ENCODE measurements at regions of chr22 and their contacts with region 1.

Region 1: DNA sequence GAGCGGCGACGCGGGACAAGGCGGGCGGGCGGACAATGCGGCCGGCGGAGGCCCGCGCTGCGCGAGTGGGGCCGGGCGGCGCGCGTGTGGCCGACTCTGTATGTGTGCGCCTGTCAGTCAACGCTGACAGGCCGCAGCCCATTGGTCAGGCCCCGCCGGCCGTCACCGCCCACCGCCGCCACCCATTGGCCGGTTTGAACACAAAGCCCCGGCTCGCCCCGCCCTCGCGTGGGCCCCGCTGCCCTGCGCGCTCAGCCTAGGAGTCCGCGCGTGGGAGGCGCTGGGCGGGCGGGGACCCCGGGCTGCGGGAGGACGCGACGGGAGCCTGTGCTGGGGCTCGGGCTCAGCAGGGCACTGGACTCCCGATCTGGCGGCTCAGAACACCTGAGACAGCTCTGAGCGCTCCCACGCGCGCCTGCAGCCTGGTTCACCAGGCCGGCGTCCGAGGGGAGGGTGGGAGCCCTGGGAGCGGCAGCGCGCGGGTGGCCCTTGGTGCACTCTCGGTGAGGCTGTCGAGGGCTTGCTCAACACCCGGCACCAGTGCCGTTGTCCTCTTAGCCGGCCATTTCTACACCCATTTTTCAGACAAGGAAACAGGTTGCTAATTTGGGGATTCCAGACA is at the start of gene SUN2:
- H3K4me3 ChIP-seq: peak within 1 kb of the TSS; percentile 71
- H3K27ac ChIP-seq: peak within 1 kb of the TSS; percentile 97
- H3K4me1 ChIP-seq: peaks cover 9% of the 10 kb centered on the region
- CTCF ChIP-seq: no peak

Region 2: GRCh38 chr22:38850941-38851849 is 95.2 kb after region 1 on chr22:
- CTCF ChIA-PET with region 1: no interaction called
- POLR2A ChIA-PET with region 1: interaction called, 16 read pairs
- H3K4me3 ChIP-seq: no peak overlapping the region
- H3K27ac ChIP-seq: no peak overlapping the region
- H3K4me1 ChIP-seq: no peaks in the 10 kb centered on the region
- CTCF ChIP-seq: no peak